ENCODE measurements at regions of chr10 and their contacts with region 1.

Region 1: GRCh38 chr10:73159038-73159648 is 8.7 kb downstream of the ECD start:
- DNase-seq: peak; percentile 43 to 76
- H3K4me3 ChIP-seq: no peak overlapping the region
- H3K27ac ChIP-seq: no peak overlapping the region
- H3K4me1 ChIP-seq: peaks cover 0 to 27% (median 10%) of the 10 kb centered on the region in 4 donors
- H3K27me3 ChIP-seq: no peaks in the 10 kb centered on the region
- CTCF ChIP-seq: peak; percentile 75 to 76

Region 2: DNA sequence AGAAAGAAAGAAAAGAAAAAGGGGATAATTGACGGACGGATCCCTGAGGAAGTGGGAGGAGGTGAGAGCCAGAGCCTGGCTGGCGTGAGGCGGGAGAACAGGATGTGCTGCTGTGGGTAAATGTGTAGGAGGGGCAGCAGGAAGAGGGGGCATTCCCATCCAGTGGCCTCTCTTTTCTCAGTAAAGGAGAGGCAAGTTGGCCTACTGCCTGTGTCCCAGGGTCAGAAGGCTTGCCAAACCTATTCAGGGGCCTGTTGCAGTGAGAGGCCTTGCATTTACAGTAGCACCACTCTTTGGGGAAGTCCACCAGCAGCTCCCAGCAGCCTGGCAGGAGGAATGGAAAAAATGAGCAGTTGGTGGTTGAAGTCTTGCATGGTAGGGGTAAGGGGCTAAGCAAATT is 916.5 kb before region 1 on chr10:
- intact Hi-C with region 1: no loop called
- DNase-seq: peak; percentile 88 to 93
- H3K4me3 ChIP-seq: no peak overlapping the region
- H3K27ac ChIP-seq: peak overlapping the region; percentile 85 to 91
- H3K4me1 ChIP-seq: peaks cover 7 to 65% (median 60%) of the 10 kb centered on the region in 4 donors
- H3K27me3 ChIP-seq: no peaks in the 10 kb centered on the region
- CTCF ChIP-seq: no peak

Region 3: DNA sequence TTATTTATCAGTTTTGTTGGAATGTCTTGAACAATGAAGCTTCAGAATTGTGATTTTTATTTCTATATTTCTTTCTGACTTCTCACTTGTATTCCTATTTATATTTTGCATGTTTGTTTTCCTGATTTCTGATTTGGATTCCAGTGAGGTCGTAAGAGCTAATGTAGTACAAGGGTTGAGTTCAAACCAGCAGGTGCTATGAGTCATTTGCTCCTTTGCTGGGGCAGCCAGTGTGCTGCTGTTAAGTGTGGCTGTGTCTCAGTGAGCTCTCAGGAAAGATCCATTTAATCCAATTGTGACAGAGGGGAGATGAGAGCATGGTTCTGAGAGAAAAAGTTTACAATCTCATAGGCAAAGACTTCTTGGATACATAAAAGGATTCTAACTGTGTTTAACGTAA is 418.6 kb before region 1 on chr10:
- intact Hi-C with region 1: no loop called
- DNase-seq: no peak
- H3K4me3 ChIP-seq: no peak overlapping the region
- H3K27ac ChIP-seq: peak overlapping the region; percentile 46 to 72
- H3K4me1 ChIP-seq: peaks cover 0 to 82% (median 22%) of the 10 kb centered on the region in 4 donors
- H3K27me3 ChIP-seq: no peaks in the 10 kb centered on the region
- CTCF ChIP-seq: no peak

Region 4: DNA sequence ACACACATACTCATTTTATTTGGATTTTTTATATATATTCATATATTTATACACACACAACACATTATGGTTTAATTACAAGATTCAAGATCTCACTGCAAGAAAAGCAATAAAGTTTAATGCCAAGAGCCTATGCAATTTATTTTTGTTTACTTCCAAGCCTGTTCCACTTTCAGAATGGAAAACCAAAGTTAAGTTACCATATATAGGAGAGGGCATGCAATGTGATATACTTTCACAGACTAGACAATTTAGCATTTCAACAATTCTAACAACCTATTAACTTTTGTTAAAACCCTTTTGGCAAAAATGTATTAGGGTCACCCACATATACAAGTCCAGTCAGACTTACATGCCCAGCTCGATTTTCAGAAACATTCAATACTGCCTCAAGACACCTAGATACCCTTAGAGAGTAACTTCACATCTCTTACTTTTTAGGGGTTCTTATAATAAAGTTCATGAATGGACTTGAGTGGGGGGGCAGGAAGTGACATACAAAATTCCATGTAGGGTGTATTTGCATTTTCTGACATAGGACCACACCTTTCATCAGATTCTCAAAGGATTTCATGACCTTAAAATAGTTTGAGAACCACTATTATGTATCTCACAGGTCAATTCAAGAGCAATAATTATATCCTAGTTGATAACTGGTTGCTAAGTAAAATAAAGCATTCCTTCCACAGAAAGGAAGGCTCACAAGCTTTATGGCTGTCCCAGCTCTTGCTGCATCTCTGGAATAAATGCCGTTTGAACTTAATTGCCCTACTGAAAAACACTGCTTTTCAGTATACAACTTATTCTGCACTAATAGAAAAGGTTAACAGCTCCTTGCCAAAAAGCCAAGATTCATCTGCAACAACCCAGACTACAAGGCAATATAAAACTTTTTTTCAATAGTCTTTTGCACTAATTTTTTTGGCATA is 65.0 kb before region 1 on chr10:
- intact Hi-C with region 1: loop called (anchors 5 kb)
- DNase-seq: no peak
- H3K4me3 ChIP-seq: peak overlapping the region; percentile 67 to 92
- H3K27ac ChIP-seq: peak overlapping the region; percentile 97 to 99
- H3K4me1 ChIP-seq: peaks cover 0 to 31% (median 6%) of the 10 kb centered on the region in 4 donors
- H3K27me3 ChIP-seq: no peaks in the 10 kb centered on the region
- CTCF ChIP-seq: no peak

Region 5: DNA sequence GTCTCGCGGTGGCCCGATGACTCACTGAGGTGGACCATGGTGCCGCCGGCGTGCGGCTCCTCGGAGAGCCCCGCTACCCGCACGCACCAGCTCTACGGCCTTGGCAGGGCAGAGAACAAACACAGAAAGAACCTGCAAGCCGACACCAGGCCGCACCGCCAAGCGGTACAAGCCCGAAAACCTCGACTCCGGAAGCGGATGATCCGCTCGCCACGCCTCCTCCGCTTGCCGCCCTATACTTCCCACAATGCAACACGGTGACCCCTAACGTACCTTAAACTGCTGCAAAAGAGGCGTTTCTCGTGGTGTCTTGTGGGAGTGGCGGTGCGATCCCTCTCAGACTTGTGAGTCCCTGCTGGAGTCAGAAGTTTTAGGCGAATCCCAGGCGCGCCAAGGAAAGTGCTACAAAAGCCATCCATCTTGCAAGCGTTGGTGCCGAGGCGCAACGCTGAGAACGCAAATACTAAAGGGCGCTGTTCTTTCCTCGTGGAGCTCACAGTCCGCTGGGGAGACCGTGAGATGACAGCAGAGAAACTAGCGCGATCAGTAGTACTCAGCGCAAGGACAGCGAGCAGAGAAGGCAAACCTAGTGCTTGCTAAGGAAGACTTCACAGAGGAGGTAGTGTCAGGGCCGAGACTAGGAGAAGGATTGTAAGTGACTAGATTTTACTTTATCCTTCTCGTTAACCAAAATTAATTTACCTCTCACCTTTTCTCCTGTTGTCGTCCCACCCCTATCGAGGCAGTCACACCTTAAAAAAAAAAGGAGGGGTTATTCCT is 93.5 kb after region 1 on chr10 and contains the start of gene MRPS16:
- intact Hi-C with region 1: no loop called
- DNase-seq: peak; percentile 98
- H3K4me3 ChIP-seq: peak within 1 kb of the TSS; percentile 81
- H3K27ac ChIP-seq: peak within 1 kb of the TSS; percentile 90
- H3K4me1 ChIP-seq: peaks cover 0 to 31% (median 20%) of the 10 kb centered on the region in 4 donors
- H3K27me3 ChIP-seq: no peaks in the 10 kb centered on the region
- CTCF ChIP-seq: no peak